Lower lobe of right lung (tissue), 2 donors: ENCODE measurements at regions of chr5 and their contacts with region 1.

Region 1: DNA sequence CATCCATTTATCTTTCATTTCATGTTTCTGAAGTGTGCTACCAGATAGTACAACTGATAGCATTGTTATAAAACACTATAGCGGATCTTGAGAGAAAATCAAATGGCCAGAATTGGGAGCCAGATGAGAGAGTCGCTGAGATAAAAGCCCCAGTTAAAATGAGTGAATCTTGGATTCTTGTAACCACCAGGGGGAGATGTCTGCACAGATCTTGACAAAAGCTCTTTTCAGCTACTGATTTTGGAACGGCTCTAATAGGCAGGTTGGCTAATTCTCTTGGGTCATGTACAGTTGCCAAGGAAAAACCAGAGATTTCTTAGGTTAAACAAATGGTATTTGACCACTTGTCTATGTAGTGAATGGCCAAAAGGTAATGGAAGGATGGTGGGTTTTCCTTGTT is 21.7 kb downstream of the F2RL2 start:
- DNase-seq: no peak
- ATAC-seq: peak; percentile 66 to 74
- H3K4me3 ChIP-seq: no peak overlapping the region
- H3K27ac ChIP-seq: no peak overlapping the region
- H3K4me1 ChIP-seq: no peaks in the 10 kb centered on the region
- H3K27me3 ChIP-seq: no peaks in the 10 kb centered on the region
- CTCF ChIP-seq: peak; percentile 70

Region 2: DNA sequence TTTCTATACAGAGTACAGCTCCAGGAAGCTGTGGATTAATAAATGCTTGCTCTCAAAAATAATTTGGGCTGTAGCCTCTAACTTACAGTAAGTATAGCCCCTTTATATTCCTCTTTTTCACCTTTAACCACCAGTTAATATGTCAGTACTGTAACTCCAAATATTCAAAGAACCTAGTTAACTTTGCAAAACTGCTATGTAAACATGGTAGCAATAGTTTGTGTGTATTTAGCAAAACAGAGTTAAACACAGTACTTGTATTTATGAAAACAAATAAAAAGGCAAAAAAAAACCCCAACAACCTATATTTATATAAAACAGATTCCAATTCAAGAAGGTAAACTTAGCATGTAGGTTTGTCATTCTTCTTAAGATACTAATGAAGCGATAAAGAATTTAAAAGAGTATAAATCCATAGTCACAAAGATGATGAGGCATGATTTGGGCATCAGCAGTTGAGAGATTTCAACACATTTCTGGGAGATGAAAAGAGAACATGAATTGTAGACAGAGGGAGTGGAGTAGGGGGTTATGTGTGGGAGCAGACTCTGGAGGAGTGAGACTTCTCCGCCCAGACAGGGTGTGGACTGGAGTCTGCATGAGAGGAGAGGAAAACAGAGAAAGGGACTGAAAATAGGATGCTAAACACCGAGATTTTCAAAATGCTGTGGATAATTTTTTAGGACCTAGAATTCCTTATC is 170.4 kb after region 1 on chr5:
- intact Hi-C with region 1: loop called (anchors 10 kb)
- DNase-seq: no peak
- ATAC-seq: no peak
- H3K4me3 ChIP-seq: no peak overlapping the region
- H3K27ac ChIP-seq: no peak overlapping the region
- H3K4me1 ChIP-seq: peaks cover 4% of the 10 kb centered on the region
- H3K27me3 ChIP-seq: no peaks in the 10 kb centered on the region
- CTCF ChIP-seq: no peak